ENCODE measurements at regions of chr1 and their contacts with region 1.

Region 1: GRCh38 chr1:6239950-6240768 is 3.8 kb upstream of the HES3 start:
- DNase-seq: no peak
- ATAC-seq: no peak
- H3K4me3 ChIP-seq: no peak overlapping the region
- H3K4me3 Mint-ChIP-seq: no peak overlapping the region
- H3K27ac ChIP-seq: no peak overlapping the region
- H3K27ac Mint-ChIP-seq: no peak overlapping the region
- H3K4me1 ChIP-seq: peaks cover 6% of the 10 kb centered on the region
- H3K4me1 Mint-ChIP-seq: peaks cover 7 to 10% of the 10 kb centered on the region in 2 donors
- H3K27me3 ChIP-seq: peaks cover 36% of the 10 kb centered on the region
- H3K27me3 Mint-ChIP-seq: peaks cover 17 to 36% of the 10 kb centered on the region in 2 donors
- CTCF ChIP-seq: no peak

Region 2: GRCh38 chr1:6108937-6109614 is 131.1 kb before region 1 on chr1:
- intact Hi-C with region 1: loop called (anchors 5 kb)
- DNase-seq: peak in 1 of 2 donors; percentile 56
- ATAC-seq: peak; percentile 55 to 82 (median 78)
- H3K4me3 ChIP-seq: no peak overlapping the region
- H3K4me3 Mint-ChIP-seq: no peak overlapping the region
- H3K27ac ChIP-seq: no peak overlapping the region
- H3K27ac Mint-ChIP-seq: no peak overlapping the region
- H3K4me1 ChIP-seq: no peaks in the 10 kb centered on the region
- H3K4me1 Mint-ChIP-seq: peaks cover 0 to 7% of the 10 kb centered on the region in 2 donors
- H3K27me3 ChIP-seq: no peaks in the 10 kb centered on the region
- H3K27me3 Mint-ChIP-seq: peaks cover 0 to 11% of the 10 kb centered on the region in 2 donors
- CTCF ChIP-seq: no peak

Region 3: DNA sequence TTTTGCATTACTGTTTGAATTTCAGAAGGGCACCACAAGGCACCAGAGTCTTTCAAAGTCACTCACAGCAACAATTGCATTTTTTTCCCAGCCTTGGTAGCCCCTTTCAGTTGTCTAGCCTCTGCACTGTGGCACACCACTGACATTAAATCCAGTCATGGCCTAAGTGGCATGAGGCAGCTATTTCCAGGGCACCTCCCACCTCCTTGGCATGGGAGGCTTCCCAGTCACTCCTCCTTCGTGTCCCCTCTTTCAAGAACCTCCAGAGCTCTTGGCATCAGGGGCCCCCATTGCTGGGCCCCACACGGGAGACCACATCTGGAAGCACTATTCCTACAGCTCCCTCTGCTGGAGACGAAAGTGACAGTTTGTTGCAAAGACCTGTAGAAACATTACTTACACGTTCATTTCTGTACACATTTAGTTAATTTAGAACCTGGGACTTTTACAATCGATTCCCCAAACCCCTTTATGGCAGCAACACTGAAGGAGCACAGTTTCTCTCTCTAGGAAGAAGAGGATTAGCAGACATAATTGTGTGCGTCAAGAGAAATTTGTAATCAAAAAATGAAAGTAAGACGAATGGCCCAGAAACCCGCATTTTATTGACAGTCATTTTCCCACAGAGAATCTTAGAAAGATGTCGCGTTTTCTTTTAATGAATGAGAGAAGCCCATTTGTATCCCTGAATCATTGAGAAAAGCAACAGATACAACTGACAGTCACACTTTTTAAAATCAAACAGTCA is 54.4 kb before region 1 on chr1:
- intact Hi-C with region 1: no loop called
- DNase-seq: peak in 1 of 2 donors; percentile 59
- ATAC-seq: no peak
- H3K4me3 ChIP-seq: no peak overlapping the region
- H3K4me3 Mint-ChIP-seq: no peak overlapping the region
- H3K27ac ChIP-seq: no peak overlapping the region
- H3K27ac Mint-ChIP-seq: no peak overlapping the region
- H3K4me1 ChIP-seq: peaks cover 5% of the 10 kb centered on the region
- H3K4me1 Mint-ChIP-seq: peaks cover 14 to 28% of the 10 kb centered on the region in 2 donors
- H3K27me3 ChIP-seq: peaks cover 8% of the 10 kb centered on the region
- H3K27me3 Mint-ChIP-seq: peaks cover 11 to 13% of the 10 kb centered on the region in 2 donors
- CTCF ChIP-seq: no peak

Measured in natural killer cell (primary cell).